ENCODE measurements at regions of chr9 and their contacts with region 1.

Region 1: DNA sequence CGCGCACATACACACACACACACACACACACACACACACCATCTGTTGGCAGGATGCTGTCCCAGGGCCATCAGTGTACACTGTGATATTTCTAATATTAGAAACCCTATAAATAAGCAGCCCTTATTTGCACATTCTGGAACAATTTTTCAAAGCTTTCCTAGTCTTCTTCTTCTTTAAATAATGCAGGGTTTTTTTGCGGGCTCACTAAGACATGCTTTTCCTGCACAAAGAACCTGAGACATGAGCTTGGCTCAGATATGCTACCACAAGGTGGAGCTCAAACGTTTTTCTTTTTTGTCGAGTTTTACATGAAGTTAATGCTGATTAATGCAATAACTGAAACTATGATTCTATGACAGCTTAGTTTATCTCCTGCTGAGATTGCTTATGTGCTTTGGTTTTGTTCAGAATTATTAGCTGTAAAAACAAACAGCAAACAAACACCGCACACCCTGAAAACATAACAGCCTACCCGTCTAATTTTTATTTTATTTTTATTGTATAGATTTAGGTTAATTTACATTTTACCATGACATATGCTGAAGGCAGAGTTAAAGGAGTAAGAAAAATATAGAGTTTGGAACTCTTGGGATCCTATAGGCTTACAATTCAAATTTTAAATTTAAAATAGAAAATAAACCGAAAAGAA is 95.8 kb downstream of the ALDH1A1 start:
- DNase-seq: peak in 2 of 6 donors; percentile 10 to 40
- ATAC-seq: peak; percentile 78 to 90 (median 88)
- H3K4me3 ChIP-seq: no peak overlapping the region
- H3K27ac ChIP-seq: no peak overlapping the region
- H3K4me1 ChIP-seq: peaks cover 0 to 20% (median 7%) of the 10 kb centered on the region in 3 donors
- H3K27me3 ChIP-seq: no peaks in the 10 kb centered on the region
- CTCF ChIP-seq: peak; percentile 21 to 41 (median 26)

Region 2: DNA sequence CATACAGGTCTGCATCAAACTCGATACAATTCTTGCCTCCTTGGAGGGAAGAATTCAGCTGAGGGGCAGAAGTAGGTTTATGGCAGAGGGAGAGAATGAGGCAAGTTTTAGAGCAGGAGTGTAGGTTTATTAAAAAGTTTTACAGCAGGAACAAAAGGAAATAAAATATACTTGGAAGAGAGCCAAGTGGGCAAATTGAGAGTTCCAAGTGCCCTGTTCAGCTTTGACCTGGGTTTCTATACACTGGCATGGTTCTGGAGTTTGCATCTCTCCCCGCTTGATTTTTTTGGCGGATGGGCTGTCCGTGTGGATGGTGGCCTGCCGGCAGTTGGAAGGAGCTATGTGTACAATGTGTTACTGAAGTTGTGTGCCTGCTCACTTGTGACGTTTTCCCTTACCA is 20.3 kb before region 1 on chr9:
- intact Hi-C with region 1: loop called in 1 of 3 experiments (anchors 2 kb)
- DNase-seq: no peak
- ATAC-seq: no peak
- H3K4me3 ChIP-seq: no peak overlapping the region
- H3K27ac ChIP-seq: no peak overlapping the region
- H3K4me1 ChIP-seq: no peaks in the 10 kb centered on the region
- H3K27me3 ChIP-seq: no peaks in the 10 kb centered on the region
- CTCF ChIP-seq: no peak

Region 3: DNA sequence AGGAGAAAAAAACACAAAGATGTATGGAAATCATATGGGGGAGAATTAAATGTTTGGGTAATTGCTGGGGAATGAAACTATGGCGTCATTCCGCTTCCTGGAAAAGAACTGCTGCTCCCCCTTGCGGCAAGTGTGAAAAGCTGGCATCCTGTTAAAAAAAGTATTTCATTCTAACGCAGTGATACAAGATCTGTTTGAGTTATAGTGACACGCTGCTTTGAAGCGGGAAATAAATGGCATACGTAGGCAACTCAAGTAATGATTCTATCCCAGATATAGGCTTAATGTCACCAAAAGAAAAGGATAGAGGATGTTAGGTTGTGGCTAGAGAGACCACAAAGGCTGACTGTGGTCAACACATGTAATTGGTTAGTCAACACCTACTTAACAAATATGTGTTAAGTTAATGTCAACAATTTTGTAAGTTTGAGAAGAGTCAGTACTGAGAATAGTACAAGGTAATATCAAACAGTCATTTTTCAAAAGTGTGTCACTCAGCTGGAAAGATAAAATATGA is 166.0 kb after region 1 on chr9:
- intact Hi-C with region 1: loop called in 2 of 3 experiments (anchors 5 to 10 kb)
- DNase-seq: peak in 5 of 6 donors; percentile 18 to 68 (median 47)
- ATAC-seq: peak; percentile 85 to 94 (median 92)
- H3K4me3 ChIP-seq: no peak overlapping the region
- H3K27ac ChIP-seq: no peak overlapping the region
- H3K4me1 ChIP-seq: peaks cover 4 to 6% (median 4%) of the 10 kb centered on the region in 3 donors
- H3K27me3 ChIP-seq: no peaks in the 10 kb centered on the region
- CTCF ChIP-seq: peak; percentile 50 to 73 (median 66)

Region 4: DNA sequence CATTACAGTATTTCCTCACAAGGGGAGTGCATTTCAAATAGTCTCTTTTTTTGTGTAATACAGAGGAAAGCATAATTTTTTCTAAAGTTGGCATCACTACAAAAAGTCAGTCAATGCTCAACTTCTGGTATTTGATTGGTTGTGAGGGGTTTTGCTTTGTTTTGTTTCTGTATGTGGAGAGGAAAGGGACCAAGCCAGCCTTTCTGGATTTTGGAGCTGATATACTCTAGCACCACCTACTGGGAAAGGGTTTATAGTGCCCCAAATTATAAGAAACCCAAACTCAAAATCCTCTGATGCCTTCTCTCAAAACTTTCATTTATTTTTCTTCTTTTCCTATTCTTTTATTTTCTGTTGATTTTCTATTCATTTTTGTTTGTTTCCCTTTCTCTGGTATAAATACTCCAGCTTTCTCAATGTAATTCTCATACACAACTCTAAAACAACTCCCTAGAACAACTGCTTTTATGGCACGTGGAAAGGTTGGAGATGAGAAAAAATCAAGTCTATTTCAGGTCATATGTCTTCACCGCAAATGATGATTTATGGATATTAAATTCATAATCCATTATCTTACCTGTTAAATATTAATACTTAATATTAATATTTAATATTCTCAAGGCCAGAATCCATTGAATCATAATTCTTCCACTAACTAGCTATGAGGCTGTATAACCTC is 225.0 kb after region 1 on chr9:
- intact Hi-C with region 1: loop called in 1 of 3 experiments (anchors 10 kb)
- DNase-seq: peak in 1 of 6 donors; percentile 15
- ATAC-seq: peak; percentile 48 to 88 (median 84)
- H3K4me3 ChIP-seq: no peak overlapping the region
- H3K27ac ChIP-seq: no peak overlapping the region
- H3K4me1 ChIP-seq: no peaks in the 10 kb centered on the region
- H3K27me3 ChIP-seq: no peaks in the 10 kb centered on the region
- CTCF ChIP-seq: peak; percentile 22 to 67 (median 52)

Region 5: DNA sequence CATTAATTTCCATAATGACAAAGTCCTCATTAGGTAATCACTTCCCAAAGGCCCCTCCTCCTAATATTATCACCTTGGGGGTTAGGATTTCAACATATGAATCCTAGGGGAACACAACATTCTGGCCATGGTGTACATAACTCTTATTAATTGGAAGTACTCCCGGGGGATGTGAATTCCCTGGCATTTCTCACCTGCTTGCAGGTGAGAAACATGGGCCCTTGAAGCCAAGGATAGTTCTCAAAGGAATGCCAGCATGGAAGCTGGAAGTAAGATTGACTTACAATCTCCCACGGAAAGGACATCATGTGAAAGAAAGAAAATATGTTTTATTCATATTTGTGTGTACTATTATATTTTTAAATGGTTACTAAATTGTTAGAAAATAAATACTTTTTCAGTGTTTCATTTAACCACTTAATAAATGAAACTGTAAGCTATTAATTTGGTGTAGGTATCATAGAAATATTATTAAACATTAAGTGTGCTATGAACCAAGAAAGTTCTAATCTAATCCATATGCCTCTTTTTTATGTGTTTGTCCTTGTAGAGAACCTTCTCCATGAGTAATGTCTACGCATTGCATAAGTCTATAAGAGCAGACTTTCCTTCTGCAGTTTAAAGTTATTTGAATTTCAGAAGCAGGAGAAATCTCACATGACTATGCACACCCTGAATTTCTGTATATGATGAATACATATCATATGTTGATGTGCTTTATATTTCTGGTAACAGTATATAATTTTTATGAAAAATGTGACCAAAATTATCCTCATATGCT is 354.0 kb after region 1 on chr9:
- intact Hi-C with region 1: no loop called
- DNase-seq: no peak
- ATAC-seq: no peak
- H3K4me3 ChIP-seq: no peak overlapping the region
- H3K27ac ChIP-seq: no peak overlapping the region
- H3K4me1 ChIP-seq: no peaks in the 10 kb centered on the region
- H3K27me3 ChIP-seq: no peaks in the 10 kb centered on the region
- CTCF ChIP-seq: no peak